ENCODE measurements at regions of chr11 and their contacts with region 1.

Region 1: DNA sequence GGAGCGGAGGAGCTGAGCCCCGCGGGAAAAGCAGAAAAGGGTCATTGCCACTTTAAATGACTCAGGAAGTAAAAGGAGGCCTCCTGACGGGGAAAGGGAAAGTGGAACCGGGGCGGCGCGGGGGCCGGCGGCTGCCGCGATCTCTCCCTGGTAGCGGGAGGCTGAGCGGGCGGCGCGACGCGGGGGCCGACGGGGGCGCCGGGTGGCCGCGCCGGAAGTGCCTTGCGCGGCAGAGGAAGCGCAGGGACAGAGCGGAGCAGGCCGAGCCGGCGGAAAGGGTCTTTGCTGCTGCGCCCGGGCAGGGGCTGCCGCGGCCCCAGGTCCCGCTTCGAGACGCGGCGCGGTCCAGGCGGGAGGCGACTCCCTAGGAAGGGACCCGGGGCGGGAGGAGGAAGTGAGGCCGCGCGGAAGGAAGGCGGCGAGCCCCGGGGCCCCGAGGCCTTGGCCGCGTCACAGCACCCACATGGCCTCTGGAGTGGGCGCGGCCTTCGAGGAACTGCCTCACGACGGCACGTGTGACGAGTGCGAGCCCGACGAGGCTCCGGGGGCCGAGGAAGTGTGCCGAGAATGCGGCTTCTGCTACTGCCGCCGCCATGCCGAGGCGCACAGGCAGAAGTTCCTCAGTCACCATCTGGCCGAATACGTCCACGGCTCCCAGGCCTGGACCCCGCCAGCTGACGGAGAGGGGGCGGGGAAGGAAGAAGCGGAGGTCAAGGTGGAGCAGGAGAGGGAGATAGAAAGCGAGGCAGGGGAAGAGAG is at the start of gene TRIM44:
- DNase-seq: peak; percentile 61 to 91 (median 74)
- ATAC-seq: peak; percentile 80
- H3K4me3 ChIP-seq: peak within 1 kb of the TSS; percentile 91
- H3K4me3 Mint-ChIP-seq: peak within 1 kb of the TSS; percentile 90
- H3K27ac ChIP-seq: peak within 1 kb of the TSS; percentile 76 to 80
- H3K27ac Mint-ChIP-seq: peak within 1 kb of the TSS; percentile 90
- H3K4me1 ChIP-seq: peaks cover 25% of the 10 kb centered on the region
- H3K4me1 Mint-ChIP-seq: peaks cover 53% of the 10 kb centered on the region
- H3K27me3 ChIP-seq: peaks cover 0 to 4% of the 10 kb centered on the region in 2 experiments
- H3K27me3 Mint-ChIP-seq: peaks cover 8% of the 10 kb centered on the region
- CTCF ChIP-seq: no peak
- total RNA-seq, gene TRIM44: 32.1 to 36.7 TPM

Region 2: GRCh38 chr11:33700425-33701271 is 1962.2 kb before region 1 on chr11 and contains the start of gene C11orf91:
- CTCF ChIA-PET with region 1: no interaction called
- POLR2A ChIA-PET with region 1: interaction called, 3 read pairs
- intact Hi-C with region 1: loop called in 1 of 2 experiments (anchors 10 kb)
- DNase-seq: peak; percentile 84 to 98 (median 94)
- ATAC-seq: peak; percentile 93
- H3K4me3 ChIP-seq: peak within 1 kb of the TSS; percentile 68
- H3K4me3 Mint-ChIP-seq: peak within 1 kb of the TSS; percentile 95
- H3K27ac ChIP-seq: no peak within 1 kb of the TSS
- H3K27ac Mint-ChIP-seq: peak within 1 kb of the TSS; percentile 64
- H3K4me1 ChIP-seq: peaks cover 14% of the 10 kb centered on the region
- H3K4me1 Mint-ChIP-seq: peaks cover 33% of the 10 kb centered on the region
- H3K27me3 ChIP-seq: no peaks in the 10 kb centered on the region
- H3K27me3 Mint-ChIP-seq: peaks cover 10% of the 10 kb centered on the region
- CTCF ChIP-seq: no peak
- total RNA-seq, gene C11orf91: 0.45 TPM in 1 of 2 experiments, not detected in the other

Region 3: DNA sequence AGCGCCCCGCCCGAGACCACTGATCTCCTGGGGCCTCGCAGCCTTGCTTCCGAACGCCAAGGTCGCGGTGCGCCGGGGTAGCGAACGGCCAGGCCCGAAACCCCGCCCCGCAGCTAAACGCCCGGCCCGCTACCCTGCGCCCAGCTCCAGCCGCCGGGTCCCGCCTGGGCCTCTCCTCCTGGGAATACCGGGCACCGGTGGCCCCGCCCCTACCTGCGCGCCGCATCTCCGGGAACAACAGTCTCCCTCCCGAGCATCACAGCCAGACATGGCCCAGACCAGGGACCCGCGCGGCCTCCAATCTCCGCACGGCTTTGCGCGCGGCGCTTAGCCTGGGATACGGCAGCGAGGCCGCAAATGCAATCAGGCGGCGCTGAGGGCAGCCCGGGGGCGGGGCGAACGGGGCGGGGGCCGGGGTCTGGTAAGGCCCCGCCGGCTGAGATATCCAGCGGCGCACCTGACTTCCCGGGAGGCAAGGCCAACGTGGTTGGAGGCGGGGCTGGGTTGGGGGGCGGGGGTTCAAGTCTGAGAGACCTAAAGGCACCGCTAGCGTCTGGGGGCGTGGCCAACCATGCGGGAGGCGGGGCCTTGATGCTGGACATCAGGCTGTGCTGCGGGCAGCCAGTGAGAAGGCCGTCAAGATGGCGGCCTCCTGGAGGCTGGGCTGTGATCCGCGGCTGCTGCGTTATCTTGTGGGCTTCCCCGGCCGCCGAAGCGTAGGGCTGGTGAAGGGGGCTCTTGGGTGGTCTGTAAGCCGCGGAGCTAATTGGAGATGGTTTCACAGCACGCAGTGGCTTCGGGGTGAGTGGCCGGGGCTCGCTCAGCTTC is 746.6 kb before region 1 on chr11 and contains the starts of genes APIP and PDHX:
- CTCF ChIA-PET with region 1: no interaction called
- POLR2A ChIA-PET with region 1: no interaction called
- intact Hi-C with region 1: loop called in 1 of 2 experiments (anchors 5 kb)
- DNase-seq: peak; percentile 91 to 99 (median 95)
- ATAC-seq: peak; percentile 90
- H3K4me3 ChIP-seq: peak within 1 kb of the TSS; percentile 94
- H3K4me3 Mint-ChIP-seq: peak within 1 kb of the TSS; percentile 96
- H3K27ac ChIP-seq: peak within 1 kb of the TSS; percentile 80 to 93
- H3K27ac Mint-ChIP-seq: peak within 1 kb of the TSS; percentile 93
- H3K4me1 ChIP-seq: peaks cover 24% of the 10 kb centered on the region
- H3K4me1 Mint-ChIP-seq: peaks cover 57% of the 10 kb centered on the region
- H3K27me3 ChIP-seq: no peaks in the 10 kb centered on the region
- H3K27me3 Mint-ChIP-seq: no peaks in the 10 kb centered on the region
- CTCF ChIP-seq: no peak
- total RNA-seq, gene APIP: 7.1 to 8.3 TPM
- total RNA-seq, gene PDHX: 17.3 to 17.4 TPM

Region 4: GRCh38 chr11:35040221-35040942 is 622.4 kb before region 1 on chr11:
- CTCF ChIA-PET with region 1: no interaction called
- POLR2A ChIA-PET with region 1: no interaction called
- intact Hi-C with region 1: loop called in 1 of 2 experiments (anchors 10 kb)
- DNase-seq: peak; percentile 37 to 92 (median 57)
- ATAC-seq: peak; percentile 79
- H3K4me3 ChIP-seq: peak overlapping the region; percentile 55
- H3K4me3 Mint-ChIP-seq: peak overlapping the region; percentile 81
- H3K27ac ChIP-seq: peak overlapping the region; percentile 84 to 88
- H3K27ac Mint-ChIP-seq: peak overlapping the region; percentile 92
- H3K4me1 ChIP-seq: peaks cover 43% of the 10 kb centered on the region
- H3K4me1 Mint-ChIP-seq: peaks cover 72% of the 10 kb centered on the region
- H3K27me3 ChIP-seq: no peaks in the 10 kb centered on the region
- H3K27me3 Mint-ChIP-seq: no peaks in the 10 kb centered on the region
- CTCF ChIP-seq: no peak

Region 5: DNA sequence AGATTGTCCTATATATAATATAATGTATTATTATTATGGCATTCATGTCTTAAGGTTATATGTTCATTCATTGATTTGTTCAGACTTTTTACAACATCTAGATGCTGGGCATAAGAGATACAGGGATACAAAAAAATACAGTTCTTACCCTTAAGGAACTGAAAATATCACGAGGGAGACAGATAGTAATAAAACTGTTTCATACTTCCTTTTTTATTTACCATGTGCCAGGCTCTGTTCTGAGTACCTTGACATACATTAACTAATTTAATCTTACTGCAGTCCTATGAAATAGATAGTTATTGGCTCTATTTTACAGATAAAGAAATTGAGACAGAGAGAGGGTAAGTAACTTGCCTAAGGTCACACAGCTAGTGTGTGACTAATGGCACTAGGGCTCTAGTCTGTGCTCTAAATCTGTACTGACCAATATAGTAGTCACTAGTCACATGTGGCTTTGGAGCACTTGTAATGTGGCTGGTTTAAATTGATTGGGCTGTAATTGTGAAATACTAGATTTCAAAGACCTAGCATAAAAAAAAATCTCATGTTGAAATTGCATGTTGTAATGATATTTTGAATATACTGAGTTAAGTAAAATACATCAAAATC is 21.0 kb after region 1 on chr11:
- CTCF ChIA-PET with region 1: no interaction called
- POLR2A ChIA-PET with region 1: no interaction called
- intact Hi-C with region 1: no loop called
- DNase-seq: peak in 2 of 14 experiments; percentile 27 to 47
- ATAC-seq: no peak
- H3K4me3 ChIP-seq: no peak overlapping the region
- H3K4me3 Mint-ChIP-seq: no peak overlapping the region
- H3K27ac ChIP-seq: no peak overlapping the region
- H3K27ac Mint-ChIP-seq: no peak overlapping the region
- H3K4me1 ChIP-seq: peaks cover 7% of the 10 kb centered on the region
- H3K4me1 Mint-ChIP-seq: peaks cover 76% of the 10 kb centered on the region
- H3K27me3 ChIP-seq: no peaks in the 10 kb centered on the region
- H3K27me3 Mint-ChIP-seq: no peaks in the 10 kb centered on the region
- CTCF ChIP-seq: no peak

Region 6: GRCh38 chr11:35714882-35715627 is 52.2 kb after region 1 on chr11:
- CTCF ChIA-PET with region 1: no interaction called
- POLR2A ChIA-PET with region 1: no interaction called
- intact Hi-C with region 1: no loop called
- DNase-seq: no peak
- ATAC-seq: no peak
- H3K4me3 ChIP-seq: no peak overlapping the region
- H3K4me3 Mint-ChIP-seq: no peak overlapping the region
- H3K27ac ChIP-seq: no peak overlapping the region
- H3K27ac Mint-ChIP-seq: no peak overlapping the region
- H3K4me1 ChIP-seq: no peaks in the 10 kb centered on the region
- H3K4me1 Mint-ChIP-seq: peaks cover 68% of the 10 kb centered on the region
- H3K27me3 ChIP-seq: no peaks in the 10 kb centered on the region
- H3K27me3 Mint-ChIP-seq: no peaks in the 10 kb centered on the region
- CTCF ChIP-seq: no peak

Region 7: DNA sequence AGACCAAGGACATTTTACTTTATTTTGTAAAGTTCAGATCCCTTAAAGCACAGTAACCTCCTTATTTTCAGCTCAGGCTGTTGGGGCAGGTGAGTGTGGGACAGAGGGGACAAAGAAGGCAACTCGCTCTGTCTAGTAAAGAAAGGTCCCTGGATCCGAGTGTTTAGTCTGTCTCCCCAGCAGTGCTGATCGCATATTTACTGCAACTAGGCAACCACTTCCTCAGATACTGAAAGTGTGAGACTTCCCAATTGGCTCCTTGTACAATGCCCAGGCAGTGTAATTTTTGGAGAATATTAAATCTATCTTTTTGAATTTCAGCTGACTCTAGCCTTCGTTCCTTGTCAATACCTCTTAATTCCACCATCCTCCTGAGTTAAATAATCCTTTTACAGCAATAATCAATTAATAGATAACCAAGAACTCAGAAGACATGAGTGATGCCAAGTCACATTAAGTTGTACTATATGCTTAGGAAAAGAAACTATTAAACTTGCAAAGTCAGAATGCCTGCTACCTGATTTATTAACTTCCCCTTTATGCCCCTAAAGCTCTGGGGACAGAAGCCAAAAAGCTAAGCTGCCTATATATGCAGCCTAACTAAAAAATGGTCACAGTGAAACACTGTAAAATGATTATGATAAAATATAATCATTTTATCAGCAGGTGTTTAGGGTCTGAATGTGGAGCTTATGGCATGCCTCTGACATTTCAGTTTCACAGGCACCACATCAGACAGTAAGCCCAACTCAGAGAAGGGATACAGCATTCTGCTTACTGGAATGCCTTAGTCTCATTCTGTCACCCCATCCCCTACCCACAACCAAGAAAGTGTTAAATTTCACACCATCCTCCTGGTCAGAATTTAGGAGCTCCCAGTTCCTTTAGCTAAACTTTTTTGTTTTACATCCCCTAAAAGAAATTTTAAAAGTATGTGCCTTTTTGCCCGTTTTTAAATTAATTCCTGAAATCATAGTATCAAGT is 138.4 kb after region 1 on chr11:
- CTCF ChIA-PET with region 1: no interaction called
- POLR2A ChIA-PET with region 1: no interaction called
- intact Hi-C with region 1: no loop called
- DNase-seq: peak in 1 of 14 experiments; percentile 4
- ATAC-seq: no peak
- H3K4me3 ChIP-seq: no peak overlapping the region
- H3K4me3 Mint-ChIP-seq: no peak overlapping the region
- H3K27ac ChIP-seq: no peak overlapping the region
- H3K27ac Mint-ChIP-seq: peak overlapping the region; percentile 34
- H3K4me1 ChIP-seq: no peaks in the 10 kb centered on the region
- H3K4me1 Mint-ChIP-seq: peaks cover 16% of the 10 kb centered on the region
- H3K27me3 ChIP-seq: no peaks in the 10 kb centered on the region
- H3K27me3 Mint-ChIP-seq: no peaks in the 10 kb centered on the region
- CTCF ChIP-seq: no peak

Region 8: GRCh38 chr11:35905646-35906276 is 242.9 kb after region 1 on chr11:
- CTCF ChIA-PET with region 1: no interaction called
- POLR2A ChIA-PET with region 1: no interaction called
- intact Hi-C with region 1: no loop called
- DNase-seq: peak in 1 of 14 experiments; percentile 1
- ATAC-seq: no peak
- H3K4me3 ChIP-seq: no peak overlapping the region
- H3K4me3 Mint-ChIP-seq: no peak overlapping the region
- H3K27ac ChIP-seq: no peak overlapping the region
- H3K27ac Mint-ChIP-seq: no peak overlapping the region
- H3K4me1 ChIP-seq: no peaks in the 10 kb centered on the region
- H3K4me1 Mint-ChIP-seq: no peaks in the 10 kb centered on the region
- H3K27me3 ChIP-seq: no peaks in the 10 kb centered on the region
- H3K27me3 Mint-ChIP-seq: peaks cover 9% of the 10 kb centered on the region
- CTCF ChIP-seq: no peak

Region 9: DNA sequence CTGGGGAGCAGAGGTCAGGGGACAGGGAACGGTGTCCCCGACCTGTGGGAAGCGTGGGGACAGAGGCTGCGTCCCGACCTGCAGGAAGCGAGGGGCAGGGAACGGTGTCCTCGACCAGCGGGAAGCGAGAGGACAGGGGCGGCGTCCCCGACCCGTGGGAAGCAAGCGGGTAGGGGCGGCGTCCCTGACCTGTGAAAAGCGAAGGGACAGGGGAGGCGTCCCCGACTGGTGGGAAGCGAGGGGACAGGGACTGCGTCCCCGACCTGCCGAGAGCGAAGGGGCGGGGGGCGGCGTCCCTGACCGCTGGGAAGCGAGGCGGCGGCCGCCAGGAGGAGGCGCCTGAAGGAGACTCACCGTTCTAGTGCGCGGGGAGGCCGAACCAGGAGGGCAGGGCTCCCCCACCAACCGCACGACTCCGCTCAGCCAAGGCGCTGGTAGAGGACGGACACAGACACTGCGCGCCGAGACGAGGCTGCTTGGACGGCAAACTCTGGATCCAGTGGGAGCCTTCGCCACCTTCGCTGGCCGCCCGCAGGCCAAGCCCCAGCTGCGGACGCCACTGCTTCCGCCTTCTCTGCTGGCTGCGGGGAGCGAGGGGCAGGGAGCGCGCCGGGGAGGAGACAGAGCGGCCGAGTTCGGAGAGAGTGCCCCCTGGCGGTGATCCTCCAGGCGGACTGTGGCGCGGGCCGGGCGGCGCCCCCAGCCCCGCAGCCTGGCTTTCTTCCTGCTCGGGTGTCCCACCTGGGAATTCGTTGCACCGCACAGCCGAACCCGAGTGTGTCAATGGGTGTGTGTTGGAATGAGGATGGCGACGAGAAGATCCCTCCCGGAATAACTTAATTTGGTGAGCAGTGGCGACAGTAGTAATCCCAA is 847.1 kb after region 1 on chr11 and contains the start of gene TRAF6:
- CTCF ChIA-PET with region 1: interaction called, 3 read pairs
- POLR2A ChIA-PET with region 1: interaction called, 3 read pairs
- intact Hi-C with region 1: loop called in 1 of 2 experiments (anchors 2 kb)
- DNase-seq: peak; percentile 78 to 94 (median 87)
- ATAC-seq: peak; percentile 93
- H3K4me3 ChIP-seq: peak within 1 kb of the TSS; percentile 92
- H3K4me3 Mint-ChIP-seq: peak within 1 kb of the TSS; percentile 99
- H3K27ac ChIP-seq: peak within 1 kb of the TSS; percentile 75 to 79
- H3K27ac Mint-ChIP-seq: peak within 1 kb of the TSS; percentile 84
- H3K4me1 ChIP-seq: peaks cover 21% of the 10 kb centered on the region
- H3K4me1 Mint-ChIP-seq: peaks cover 43% of the 10 kb centered on the region
- H3K27me3 ChIP-seq: peaks cover 0 to 3% of the 10 kb centered on the region in 2 experiments
- H3K27me3 Mint-ChIP-seq: peaks cover 10% of the 10 kb centered on the region
- CTCF ChIP-seq: peak; percentile 94
- total RNA-seq, gene TRAF6: 27.9 to 29.0 TPM